ENCODE measurements at regions of chr11 and their contacts with region 1.

Region 1: DNA sequence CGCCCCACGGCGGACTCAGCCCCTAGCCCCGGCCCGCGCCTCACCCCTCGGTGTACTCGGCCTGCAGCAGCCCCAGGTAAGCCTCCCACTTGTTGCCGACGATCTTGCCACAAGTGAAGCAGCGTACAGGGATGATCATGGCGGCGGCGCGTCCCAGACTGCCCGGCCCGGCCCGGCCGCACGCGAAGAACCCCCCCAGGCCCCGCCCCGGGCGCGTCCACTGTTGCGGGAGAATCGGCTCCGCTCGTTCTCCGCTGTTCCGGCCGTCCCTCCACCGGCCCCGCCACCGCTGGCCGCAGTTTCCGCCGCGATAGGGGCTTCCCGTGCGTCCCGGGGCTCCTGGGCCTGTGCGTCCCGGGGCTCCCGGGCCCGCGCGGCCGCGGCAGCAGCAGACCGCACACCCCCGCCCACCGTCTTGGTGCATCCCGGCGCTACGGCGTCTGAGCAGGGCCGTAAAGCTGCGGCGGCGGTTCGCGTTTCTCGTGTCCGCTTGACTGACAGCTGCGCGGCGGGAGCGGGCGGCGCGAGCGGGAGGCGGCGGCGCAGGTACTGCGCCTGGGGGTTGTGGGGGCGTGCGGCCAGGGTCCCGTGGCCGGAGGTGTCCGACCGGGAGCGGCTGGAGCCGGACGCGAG is at the starts of genes POLR2L and TSPAN4:
- DNase-seq: peak; percentile 83 to 87 (median 84)
- H3K4me3 ChIP-seq: peak within 1 kb of the TSS; percentile 88 to 94 (median 92)
- H3K4me3 Mint-ChIP-seq: peak within 1 kb of the TSS; percentile 88 to 93
- H3K27ac ChIP-seq: peak within 1 kb of the TSS; percentile 70 to 93
- H3K27ac Mint-ChIP-seq: peak within 1 kb of the TSS; percentile 72 to 91 (median 84)
- H3K4me1 ChIP-seq: peaks cover 40 to 64% of the 10 kb centered on the region in 2 donors
- H3K4me1 Mint-ChIP-seq: peaks cover 43% of the 10 kb centered on the region
- H3K27me3 ChIP-seq: no peaks in the 10 kb centered on the region
- H3K27me3 Mint-ChIP-seq: peaks cover 0 to 13% (median 8%) of the 10 kb centered on the region in 3 donors
- CTCF ChIP-seq: no peak
- polyA plus RNA-seq, gene POLR2L: 93.9 to 133 (median 110) TPM
- polyA plus RNA-seq, gene TSPAN4: 52.6 to 75.5 (median 63.1) TPM

Region 2: GRCh38 chr11:257766-258493 is 584.6 kb before region 1 on chr11:
- intact Hi-C with region 1: no loop called
- DNase-seq: no peak
- H3K4me3 ChIP-seq: no peak overlapping the region
- H3K4me3 Mint-ChIP-seq: peak overlapping the region in 1 of 2 donors; percentile 32
- H3K27ac ChIP-seq: no peak overlapping the region
- H3K27ac Mint-ChIP-seq: peak overlapping the region in 1 of 7 donors; percentile 61
- H3K4me1 ChIP-seq: no peaks in the 10 kb centered on the region
- H3K4me1 Mint-ChIP-seq: peaks cover 7% of the 10 kb centered on the region
- H3K27me3 ChIP-seq: no peaks in the 10 kb centered on the region
- H3K27me3 Mint-ChIP-seq: peaks cover 0 to 6% (median 4%) of the 10 kb centered on the region in 3 donors
- CTCF ChIP-seq: no peak

Region 3: GRCh38 chr11:809287-810039 is 33.0 kb before region 1 on chr11 and contains the start of gene RPLP2:
- intact Hi-C with region 1: loop called in 1 of 2 experiments (anchors 5 kb)
- DNase-seq: peak; percentile 97 to 98 (median 98)
- H3K4me3 ChIP-seq: peak within 1 kb of the TSS; percentile 79 to 96 (median 91)
- H3K4me3 Mint-ChIP-seq: peak within 1 kb of the TSS; percentile 93 to 95
- H3K27ac ChIP-seq: peak within 1 kb of the TSS; percentile 89 to 97
- H3K27ac Mint-ChIP-seq: peak within 1 kb of the TSS; percentile 96 to 100 (median 98)
- H3K4me1 ChIP-seq: peaks cover 33 to 40% of the 10 kb centered on the region in 2 donors
- H3K4me1 Mint-ChIP-seq: peaks cover 40% of the 10 kb centered on the region
- H3K27me3 ChIP-seq: no peaks in the 10 kb centered on the region
- H3K27me3 Mint-ChIP-seq: peaks cover 0 to under 1% (median 0%) of the 10 kb centered on the region in 3 donors
- CTCF ChIP-seq: no peak
- polyA plus RNA-seq, gene RPLP2: 879 to 1,191 (median 990) TPM

Region 4: DNA sequence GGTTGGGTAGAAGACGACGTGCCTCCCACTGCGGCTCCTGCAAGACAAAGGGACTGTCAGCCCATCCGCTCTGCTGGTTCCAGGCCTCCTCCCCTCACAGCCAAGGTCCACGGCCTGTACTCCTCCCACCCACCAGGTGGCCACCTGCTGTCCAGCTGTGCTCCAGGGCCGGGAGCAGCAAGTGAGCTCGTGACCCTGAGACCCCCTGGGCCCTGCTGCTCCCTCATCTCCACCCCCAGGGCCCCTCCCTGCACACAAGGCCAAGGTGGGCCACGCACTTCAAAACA is 27.6 kb after region 1 on chr11:
- intact Hi-C with region 1: no loop called
- DNase-seq: no peak
- H3K4me3 ChIP-seq: no peak overlapping the region
- H3K4me3 Mint-ChIP-seq: no peak overlapping the region
- H3K27ac ChIP-seq: no peak overlapping the region
- H3K27ac Mint-ChIP-seq: no peak overlapping the region
- H3K4me1 ChIP-seq: no peaks in the 10 kb centered on the region
- H3K4me1 Mint-ChIP-seq: no peaks in the 10 kb centered on the region
- H3K27me3 ChIP-seq: no peaks in the 10 kb centered on the region
- H3K27me3 Mint-ChIP-seq: peaks cover 0 to 2% (median 2%) of the 10 kb centered on the region in 3 donors
- CTCF ChIP-seq: peak; percentile 7

Region 5: GRCh38 chr11:942823-943222 is 100.3 kb after region 1 on chr11:
- intact Hi-C with region 1: no loop called
- DNase-seq: no peak
- H3K4me3 ChIP-seq: no peak overlapping the region
- H3K4me3 Mint-ChIP-seq: no peak overlapping the region
- H3K27ac ChIP-seq: no peak overlapping the region
- H3K27ac Mint-ChIP-seq: peak overlapping the region in 1 of 7 donors; percentile 58
- H3K4me1 ChIP-seq: peaks cover 0 to 7% of the 10 kb centered on the region in 2 donors
- H3K4me1 Mint-ChIP-seq: peaks cover 26% of the 10 kb centered on the region
- H3K27me3 ChIP-seq: no peaks in the 10 kb centered on the region
- H3K27me3 Mint-ChIP-seq: no peaks in the 10 kb centered on the region
- CTCF ChIP-seq: no peak